Activated naive CD4-positive, alpha-beta T cell treated with anti-CD3 and anti-CD28 coated beads for 36 hours (primary cell): ENCODE measurements at regions of chr9 and their contacts with region 1.

Region 1: GRCh38 chr9:131762356-131762932 is 22.6 kb upstream of the RAPGEF1 start:
- DNase-seq: peak; percentile 74
- H3K4me3 Mint-ChIP-seq: no peak overlapping the region
- H3K27ac Mint-ChIP-seq: no peak overlapping the region
- H3K4me1 Mint-ChIP-seq: peaks cover 9% of the 10 kb centered on the region
- H3K27me3 Mint-ChIP-seq: no peaks in the 10 kb centered on the region

Region 2: DNA sequence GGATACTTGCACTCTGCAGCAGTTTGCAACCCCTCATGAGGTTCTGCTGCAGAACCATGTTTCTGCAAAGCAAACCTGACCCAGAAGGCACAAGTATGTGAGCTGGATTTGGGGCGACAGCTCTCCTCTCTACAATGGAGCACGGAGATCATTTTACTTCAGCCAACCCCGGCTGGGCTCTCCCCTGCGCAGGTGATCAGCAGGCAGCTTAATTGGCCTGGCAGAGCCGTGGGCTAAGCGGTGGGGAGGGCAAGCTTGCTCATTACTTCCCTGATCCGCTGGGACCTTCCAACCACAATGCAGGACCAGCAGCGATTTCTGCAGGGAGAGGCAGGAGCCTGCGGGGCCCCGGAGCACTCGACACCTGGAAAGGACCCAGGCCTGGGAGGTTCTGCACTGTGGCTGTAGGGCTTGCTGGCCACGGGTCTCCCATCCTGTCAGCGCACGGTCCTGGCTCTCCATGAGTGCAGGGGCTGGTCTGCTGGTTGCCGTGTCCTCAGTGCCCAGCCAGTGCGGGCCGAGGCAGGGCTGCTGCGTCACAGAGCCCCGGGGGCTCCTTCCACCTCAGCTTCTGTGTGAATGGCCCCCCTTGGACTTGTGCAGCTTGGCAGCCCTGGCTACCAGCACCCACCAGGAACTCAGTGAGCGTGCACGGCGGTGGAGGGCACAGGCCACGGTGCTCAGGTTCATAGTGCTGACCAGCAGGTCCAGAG is 29.3 kb after region 1 on chr9:
- CTCF ChIA-PET with region 1: interaction called, 8 read pairs
- intact Hi-C with region 1: loop called (anchors 2 kb)
- DNase-seq: no peak
- H3K4me3 Mint-ChIP-seq: no peak overlapping the region
- H3K27ac Mint-ChIP-seq: no peak overlapping the region
- H3K4me1 Mint-ChIP-seq: no peaks in the 10 kb centered on the region
- H3K27me3 Mint-ChIP-seq: peaks cover 30% of the 10 kb centered on the region

Region 3: GRCh38 chr9:131954299-131954698 is 191.9 kb after region 1 on chr9:
- CTCF ChIA-PET with region 1: interaction called, 3 read pairs
- intact Hi-C with region 1: loop called (anchors 2 kb)
- DNase-seq: peak; percentile 10
- H3K4me3 Mint-ChIP-seq: no peak overlapping the region
- H3K27ac Mint-ChIP-seq: no peak overlapping the region
- H3K4me1 Mint-ChIP-seq: no peaks in the 10 kb centered on the region
- H3K27me3 Mint-ChIP-seq: no peaks in the 10 kb centered on the region

Region 4: DNA sequence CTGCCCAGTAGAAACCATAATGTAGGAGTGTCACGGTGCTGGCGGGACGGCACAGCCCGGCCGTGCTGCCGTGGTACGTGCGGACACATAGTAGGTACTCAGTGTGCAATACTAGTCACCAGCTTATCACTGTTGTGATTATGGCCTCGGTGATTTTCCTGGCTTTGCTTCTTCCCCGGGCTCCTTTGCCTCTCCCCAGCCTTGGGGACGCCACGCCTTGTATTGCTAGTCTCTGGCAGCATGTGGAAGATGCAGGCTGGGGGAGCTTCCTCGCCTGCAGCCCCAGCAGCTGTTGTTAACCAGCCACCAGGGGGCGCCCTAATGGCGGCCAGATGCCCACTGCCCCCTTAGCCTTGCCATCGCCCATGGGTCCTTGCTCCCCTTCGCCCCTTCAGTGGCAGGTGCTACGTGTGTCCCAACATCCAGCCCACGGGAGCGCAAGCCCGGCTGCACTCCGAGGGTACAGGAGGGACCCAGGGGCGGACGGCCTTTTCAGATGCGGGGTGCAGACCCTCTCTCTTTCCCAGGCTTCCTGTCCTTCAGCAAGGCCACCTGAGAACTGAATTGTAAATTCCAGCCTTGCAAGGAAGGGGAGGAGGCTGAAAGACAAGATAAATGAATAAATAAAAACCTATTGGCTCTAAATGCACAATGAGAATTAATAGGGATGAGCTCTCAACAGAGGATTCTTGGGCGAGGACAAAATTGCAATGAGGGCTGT is 407.4 kb after region 1 on chr9:
- CTCF ChIA-PET with region 1: interaction called, 6 read pairs
- intact Hi-C with region 1: loop called (anchors 1 kb)
- DNase-seq: peak; percentile 59
- H3K4me3 Mint-ChIP-seq: no peak overlapping the region
- H3K27ac Mint-ChIP-seq: no peak overlapping the region
- H3K4me1 Mint-ChIP-seq: no peaks in the 10 kb centered on the region
- H3K27me3 Mint-ChIP-seq: peaks cover 44% of the 10 kb centered on the region

Region 5: DNA sequence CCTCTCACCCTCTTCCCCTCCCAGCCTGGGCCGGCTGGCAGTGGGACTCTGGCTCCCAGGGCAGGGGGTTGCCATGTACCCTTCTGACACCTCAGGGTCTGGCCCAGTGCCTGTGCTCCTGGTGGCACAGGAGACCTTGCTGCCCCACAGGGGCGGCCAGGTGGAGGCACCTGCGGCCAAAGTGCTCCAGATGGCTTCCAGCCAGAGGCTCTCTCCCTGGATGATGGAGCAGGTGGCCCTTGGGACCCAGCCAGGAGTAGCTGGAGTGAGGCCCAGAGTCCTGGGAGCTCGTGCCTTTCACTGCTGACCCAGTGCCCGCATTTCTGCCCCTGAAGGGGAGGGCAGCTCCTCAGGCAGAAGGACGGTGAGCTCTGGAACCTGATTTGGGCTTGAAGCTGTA is 486.7 kb after region 1 on chr9:
- CTCF ChIA-PET with region 1: interaction called, 16 read pairs
- intact Hi-C with region 1: loop called (anchors 1 kb)
- DNase-seq: no peak
- H3K4me3 Mint-ChIP-seq: no peak overlapping the region
- H3K27ac Mint-ChIP-seq: no peak overlapping the region
- H3K4me1 Mint-ChIP-seq: no peaks in the 10 kb centered on the region
- H3K27me3 Mint-ChIP-seq: no peaks in the 10 kb centered on the region